ENCODE measurements at regions of chr2 and their contacts with region 1.

Region 1: DNA sequence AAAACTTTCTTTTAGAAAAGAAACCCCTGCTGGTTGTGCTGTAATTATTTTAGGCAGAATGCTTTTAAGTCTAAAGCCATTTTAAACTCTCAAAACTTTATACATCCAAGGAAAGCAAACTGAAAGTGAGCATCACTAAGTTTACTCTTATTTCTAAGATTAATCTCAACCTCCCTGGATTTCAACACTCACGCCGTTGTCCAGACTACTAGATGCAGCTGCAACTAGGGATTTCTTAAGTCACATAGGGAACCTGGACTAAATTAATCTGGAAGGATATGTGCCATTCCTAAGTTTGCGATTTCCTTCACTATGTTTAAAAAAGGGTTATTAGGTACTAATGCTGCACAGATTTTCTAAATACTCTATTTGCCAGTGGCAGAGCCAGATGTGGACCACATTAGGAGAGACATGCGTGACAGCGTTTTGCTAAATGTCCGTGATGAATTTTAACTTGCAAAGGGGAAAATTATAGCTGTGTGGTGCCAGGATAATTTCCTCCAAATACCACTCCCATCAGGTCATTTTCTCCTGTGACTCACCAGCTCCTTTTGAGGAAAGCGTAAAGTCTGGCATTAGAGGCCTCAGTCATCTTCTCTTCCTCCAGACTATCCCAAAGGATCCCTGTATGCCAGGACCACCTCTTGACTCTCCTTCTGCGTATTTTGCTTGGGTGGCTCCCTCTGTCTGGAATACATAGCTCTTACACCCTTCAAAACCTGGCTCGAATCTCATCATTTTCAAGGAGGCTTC is 143.7 kb downstream of the ATL2 start:
- DNase-seq: no peak
- H3K4me3 ChIP-seq: no peak overlapping the region
- H3K27ac ChIP-seq: no peak overlapping the region
- H3K4me1 ChIP-seq: no peaks in the 10 kb centered on the region
- H3K27me3 ChIP-seq: no peaks in the 10 kb centered on the region
- CTCF ChIP-seq: no peak

Region 2: DNA sequence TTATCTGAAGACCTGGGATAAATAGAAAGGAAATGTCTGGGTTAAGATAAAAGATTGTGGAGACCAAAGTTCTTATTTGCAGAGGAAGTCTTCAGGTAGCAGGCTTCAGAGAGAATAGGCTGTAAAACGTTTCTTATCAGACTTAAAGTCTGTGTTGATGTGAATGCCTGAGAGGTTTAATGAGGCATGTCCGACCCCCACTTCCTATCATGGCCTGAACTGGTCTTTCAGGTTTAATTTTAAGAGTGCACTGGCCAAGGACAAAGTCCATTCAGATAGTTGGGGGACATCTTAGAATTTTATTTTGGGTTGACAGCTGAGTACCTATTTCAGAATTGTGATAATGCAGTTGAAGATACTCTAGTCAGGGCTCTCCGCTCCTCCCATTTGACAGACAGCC is 51.6 kb after region 1 on chr2:
- CTCF ChIA-PET with region 1: no interaction called
- dilution Hi-C with region 1: loop called (anchors 5 kb)
- in situ Hi-C with region 1: no loop called
- intact Hi-C with region 1: no loop called
- DNase-seq: no peak
- H3K4me3 ChIP-seq: no peak overlapping the region
- H3K27ac ChIP-seq: no peak overlapping the region
- H3K4me1 ChIP-seq: peaks cover 4% of the 10 kb centered on the region
- H3K27me3 ChIP-seq: no peaks in the 10 kb centered on the region
- CTCF ChIP-seq: no peak

Region 3: DNA sequence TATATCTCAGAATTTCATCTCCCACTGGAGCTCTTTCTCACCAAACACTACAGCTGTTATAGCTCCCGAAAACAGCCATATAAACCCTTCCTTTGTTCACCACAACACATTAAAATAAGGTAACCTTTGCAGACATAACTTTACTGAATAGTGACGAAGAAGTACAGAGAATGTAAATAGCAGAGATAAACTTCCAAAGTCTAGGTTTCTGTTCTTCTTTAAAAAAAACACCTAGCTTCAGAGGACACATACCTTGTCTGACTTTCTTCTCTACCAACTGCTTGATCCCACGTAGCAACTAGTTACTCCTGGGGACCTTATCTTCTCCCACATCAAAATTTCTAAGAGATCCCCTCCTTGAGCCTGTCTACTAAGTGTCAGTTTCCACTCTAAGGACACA is 111.4 kb after region 1 on chr2:
- CTCF ChIA-PET with region 1: no interaction called
- dilution Hi-C with region 1: no loop called
- in situ Hi-C with region 1: no loop called
- intact Hi-C with region 1: no loop called
- DNase-seq: no peak
- H3K4me3 ChIP-seq: no peak overlapping the region
- H3K27ac ChIP-seq: no peak overlapping the region
- H3K4me1 ChIP-seq: no peaks in the 10 kb centered on the region
- H3K27me3 ChIP-seq: no peaks in the 10 kb centered on the region
- CTCF ChIP-seq: no peak

Measured in mammary epithelial cell (primary cell).